Activated CD8-positive, alpha-beta T cell treated with anti-CD3 and anti-CD28 coated beads for 36 hours (primary cell): ENCODE measurements at regions of chr2 and their contacts with region 1.

Region 1: GRCh38 chr2:157336137-157337010 is 10.8 kb upstream of the ERMN start:
- DNase-seq: peak; percentile 69
- ATAC-seq: no peak
- H3K4me3 Mint-ChIP-seq: peak overlapping the region; percentile 42
- H3K27ac Mint-ChIP-seq: peak overlapping the region; percentile 14
- H3K4me1 Mint-ChIP-seq: peaks cover 63% of the 10 kb centered on the region
- H3K27me3 Mint-ChIP-seq: no peaks in the 10 kb centered on the region
- CTCF ChIP-seq: peak; percentile 91

Region 2: GRCh38 chr2:157192445-157193423 is 143.6 kb before region 1 on chr2:
- CTCF ChIA-PET with region 1: no interaction called
- POLR2A ChIA-PET with region 1: no interaction called
- intact Hi-C with region 1: no loop called
- DNase-seq: no peak
- ATAC-seq: no peak
- H3K4me3 Mint-ChIP-seq: no peak overlapping the region
- H3K27ac Mint-ChIP-seq: no peak overlapping the region
- H3K4me1 Mint-ChIP-seq: no peaks in the 10 kb centered on the region
- H3K27me3 Mint-ChIP-seq: peaks cover 4% of the 10 kb centered on the region
- CTCF ChIP-seq: no peak

Region 3: DNA sequence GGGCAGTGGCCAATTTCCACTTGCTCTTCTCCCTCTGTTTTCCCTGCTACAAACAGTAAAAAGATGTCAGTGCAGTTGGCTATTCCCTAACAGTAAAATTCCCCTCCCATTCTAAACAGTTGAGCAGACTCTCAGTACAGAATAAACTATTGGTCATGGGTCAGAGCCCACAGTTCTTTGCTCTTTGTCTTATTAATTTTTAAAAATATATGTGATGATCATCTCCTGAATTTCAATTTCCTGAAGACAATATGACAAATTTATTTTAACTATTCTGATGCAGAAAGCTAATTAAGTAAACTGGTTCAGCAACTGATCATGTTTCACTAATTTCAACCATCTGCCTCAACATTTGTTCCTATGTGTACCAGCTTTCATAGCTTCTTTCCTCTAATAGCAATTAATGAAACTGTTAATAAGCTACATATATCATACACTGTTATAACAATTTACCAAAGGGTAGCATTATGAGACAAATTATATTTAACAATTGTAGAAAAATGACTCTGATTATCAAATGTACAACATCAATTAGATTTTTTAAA is 119.9 kb before region 1 on chr2:
- CTCF ChIA-PET with region 1: no interaction called
- POLR2A ChIA-PET with region 1: no interaction called
- intact Hi-C with region 1: no loop called
- DNase-seq: no peak
- ATAC-seq: no peak
- H3K4me3 Mint-ChIP-seq: no peak overlapping the region
- H3K27ac Mint-ChIP-seq: no peak overlapping the region
- H3K4me1 Mint-ChIP-seq: no peaks in the 10 kb centered on the region
- H3K27me3 Mint-ChIP-seq: peaks cover 11% of the 10 kb centered on the region
- CTCF ChIP-seq: no peak

Region 4: GRCh38 chr2:157261199-157261783 is 75.1 kb before region 1 on chr2:
- CTCF ChIA-PET with region 1: no interaction called
- POLR2A ChIA-PET with region 1: no interaction called
- intact Hi-C with region 1: no loop called
- DNase-seq: peak; percentile 85
- ATAC-seq: peak; percentile 77
- H3K4me3 Mint-ChIP-seq: peak overlapping the region; percentile 39
- H3K27ac Mint-ChIP-seq: peak overlapping the region; percentile 78
- H3K4me1 Mint-ChIP-seq: peaks cover 32% of the 10 kb centered on the region
- H3K27me3 Mint-ChIP-seq: peaks cover 12% of the 10 kb centered on the region
- CTCF ChIP-seq: no peak

Region 5: GRCh38 chr2:157312866-157313486 is 23.4 kb before region 1 on chr2:
- CTCF ChIA-PET with region 1: interaction called, 119 read pairs
- POLR2A ChIA-PET with region 1: interaction called, 3 read pairs
- intact Hi-C with region 1: no loop called
- DNase-seq: no peak
- ATAC-seq: peak; percentile 34
- H3K4me3 Mint-ChIP-seq: no peak overlapping the region
- H3K27ac Mint-ChIP-seq: no peak overlapping the region
- H3K4me1 Mint-ChIP-seq: peaks cover 15% of the 10 kb centered on the region
- H3K27me3 Mint-ChIP-seq: no peaks in the 10 kb centered on the region
- CTCF ChIP-seq: no peak

Region 6: GRCh38 chr2:157349949-157350515 is 13.7 kb after region 1 on chr2:
- CTCF ChIA-PET with region 1: interaction called, 166 read pairs
- POLR2A ChIA-PET with region 1: interaction called, 5 read pairs
- intact Hi-C with region 1: no loop called
- DNase-seq: no peak
- ATAC-seq: no peak
- H3K4me3 Mint-ChIP-seq: no peak overlapping the region
- H3K27ac Mint-ChIP-seq: no peak overlapping the region
- H3K4me1 Mint-ChIP-seq: peaks cover 43% of the 10 kb centered on the region
- H3K27me3 Mint-ChIP-seq: no peaks in the 10 kb centered on the region
- CTCF ChIP-seq: no peak

Region 7: GRCh38 chr2:157363612-157364101 is 27.3 kb after region 1 on chr2:
- CTCF ChIA-PET with region 1: interaction called, 46 read pairs
- POLR2A ChIA-PET with region 1: interaction called, 3 read pairs
- intact Hi-C with region 1: no loop called
- DNase-seq: no peak
- ATAC-seq: peak; percentile 43
- H3K4me3 Mint-ChIP-seq: no peak overlapping the region
- H3K27ac Mint-ChIP-seq: peak overlapping the region; percentile 43
- H3K4me1 Mint-ChIP-seq: peaks cover 38% of the 10 kb centered on the region
- H3K27me3 Mint-ChIP-seq: no peaks in the 10 kb centered on the region
- CTCF ChIP-seq: no peak

Region 8: GRCh38 chr2:157404363-157404762 is 68.0 kb after region 1 on chr2:
- CTCF ChIA-PET with region 1: interaction called, 172 read pairs
- POLR2A ChIA-PET with region 1: interaction called, 5 read pairs
- intact Hi-C with region 1: no loop called
- DNase-seq: peak; percentile 78
- ATAC-seq: peak; percentile 89
- H3K4me3 Mint-ChIP-seq: peak overlapping the region; percentile 36
- H3K27ac Mint-ChIP-seq: peak overlapping the region; percentile 93
- H3K4me1 Mint-ChIP-seq: peaks cover 77% of the 10 kb centered on the region
- H3K27me3 Mint-ChIP-seq: no peaks in the 10 kb centered on the region
- CTCF ChIP-seq: no peak

Region 9: DNA sequence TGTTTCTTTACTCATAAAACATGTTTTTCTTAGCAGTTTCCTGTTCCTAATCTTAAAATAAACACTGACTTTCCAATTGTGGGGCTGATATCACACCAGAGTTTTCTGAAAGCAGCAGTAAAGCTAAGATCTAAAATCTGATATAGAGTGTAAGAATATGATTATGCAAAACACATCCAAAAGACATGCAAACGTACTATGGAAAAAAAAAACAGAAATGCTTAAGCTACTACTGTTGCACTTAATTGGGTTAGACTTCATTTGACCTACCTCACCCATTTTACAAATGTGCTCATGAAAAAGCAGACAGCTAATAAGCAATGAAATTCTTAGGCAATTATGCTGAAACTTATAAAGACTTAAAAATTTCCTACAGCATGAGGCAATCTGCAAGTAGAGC is 97.0 kb after region 1 on chr2:
- CTCF ChIA-PET with region 1: interaction called, 10 read pairs
- POLR2A ChIA-PET with region 1: interaction called, 8 read pairs
- intact Hi-C with region 1: no loop called
- DNase-seq: no peak
- ATAC-seq: no peak
- H3K4me3 Mint-ChIP-seq: peak overlapping the region; percentile 90
- H3K27ac Mint-ChIP-seq: peak overlapping the region; percentile 94
- H3K4me1 Mint-ChIP-seq: peaks cover 51% of the 10 kb centered on the region
- H3K27me3 Mint-ChIP-seq: no peaks in the 10 kb centered on the region
- CTCF ChIP-seq: no peak

Region 10: GRCh38 chr2:157492189-157492773 is 155.9 kb after region 1 on chr2:
- CTCF ChIA-PET with region 1: interaction called, 17 read pairs
- POLR2A ChIA-PET with region 1: interaction called, 3 read pairs
- intact Hi-C with region 1: no loop called
- DNase-seq: peak; percentile 85
- ATAC-seq: peak; percentile 86
- H3K4me3 Mint-ChIP-seq: no peak overlapping the region
- H3K27ac Mint-ChIP-seq: no peak overlapping the region
- H3K4me1 Mint-ChIP-seq: peaks cover 65% of the 10 kb centered on the region
- H3K27me3 Mint-ChIP-seq: no peaks in the 10 kb centered on the region
- CTCF ChIP-seq: peak; percentile 82

Region 11: DNA sequence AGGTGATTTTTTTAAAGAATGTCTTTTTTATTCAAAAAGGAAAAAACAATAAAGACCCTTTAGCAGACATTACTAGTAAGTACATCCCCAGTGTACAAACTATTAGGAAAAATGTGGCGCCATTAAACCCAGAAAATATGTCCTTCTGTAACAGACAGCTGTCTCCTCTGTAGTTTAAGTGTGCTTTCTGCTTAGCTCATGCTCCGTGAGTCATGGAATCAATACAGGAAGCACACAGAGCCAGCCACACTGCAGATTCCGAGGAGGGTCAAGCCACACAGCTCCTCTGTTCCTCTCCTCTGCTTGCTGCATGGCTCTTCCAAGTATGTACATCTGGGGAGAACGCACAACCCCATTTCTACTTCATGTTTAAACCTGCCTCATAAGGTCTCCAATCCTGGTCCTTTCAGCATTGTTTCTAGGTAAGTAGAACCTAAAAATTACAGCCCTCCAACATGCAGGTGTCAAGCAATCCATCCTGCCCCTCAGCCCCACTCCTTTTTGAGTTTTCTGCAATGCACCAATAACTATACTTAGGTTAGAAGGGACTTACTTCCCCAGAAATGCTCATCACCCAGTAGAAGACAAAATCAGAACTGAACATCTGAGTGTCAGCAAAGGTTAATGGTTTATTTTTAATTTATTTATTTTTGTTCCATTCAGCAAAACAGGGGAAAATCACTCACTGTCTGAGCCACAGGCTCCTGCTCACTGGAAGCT is 502.2 kb after region 1 on chr2:
- CTCF ChIA-PET with region 1: no interaction called
- POLR2A ChIA-PET with region 1: no interaction called
- intact Hi-C with region 1: no loop called
- DNase-seq: peak; percentile 35
- ATAC-seq: peak; percentile 89
- H3K4me3 Mint-ChIP-seq: no peak overlapping the region
- H3K27ac Mint-ChIP-seq: peak overlapping the region; percentile 28
- H3K4me1 Mint-ChIP-seq: peaks cover 39% of the 10 kb centered on the region
- H3K27me3 Mint-ChIP-seq: no peaks in the 10 kb centered on the region
- CTCF ChIP-seq: no peak